HCT116 (cell line): ENCODE measurements at regions of chr12 and their contacts with region 1.

Region 1: GRCh38 chr12:52390739-52391617 is 5.5 kb upstream of the KRT84 start:
- DNase-seq: peak; percentile 24
- ATAC-seq: peak; percentile 79
- H3K4me3 ChIP-seq: no peak overlapping the region
- H3K27ac ChIP-seq: no peak overlapping the region
- H3K4me1 ChIP-seq: peaks cover 0 to 23% of the 10 kb centered on the region in 2 experiments; a peak in 1 of 4 replicates
- H3K27me3 ChIP-seq: no peaks in the 10 kb centered on the region
- CTCF ChIP-seq: peak; percentile 84 to 93 (median 85)
- POLR2A ChIP-seq: no peak
- RAD21 ChIP-seq: peak; percentile 91

Region 2: GRCh38 chr12:52139552-52140062 is 251.4 kb before region 1 on chr12:
- CTCF ChIA-PET with region 1: interaction called, 5 read pairs
- POLR2A ChIA-PET with region 1: no interaction called
- RAD21 ChIA-PET with region 1: no interaction called
- intact Hi-C with region 1: loop called (anchors 5 kb)
- DNase-seq: no peak
- ATAC-seq: peak; percentile 73
- H3K4me3 ChIP-seq: no peak overlapping the region
- H3K27ac ChIP-seq: no peak overlapping the region
- H3K4me1 ChIP-seq: peaks cover 19 to 43% of the 10 kb centered on the region in 2 experiments
- H3K27me3 ChIP-seq: no peaks in the 10 kb centered on the region
- CTCF ChIP-seq: peak in 2 of 3 experiments; percentile 96 to 98; a peak in 4 of 6 replicates
- POLR2A ChIP-seq: no peak
- RAD21 ChIP-seq: no peak

Region 3: DNA sequence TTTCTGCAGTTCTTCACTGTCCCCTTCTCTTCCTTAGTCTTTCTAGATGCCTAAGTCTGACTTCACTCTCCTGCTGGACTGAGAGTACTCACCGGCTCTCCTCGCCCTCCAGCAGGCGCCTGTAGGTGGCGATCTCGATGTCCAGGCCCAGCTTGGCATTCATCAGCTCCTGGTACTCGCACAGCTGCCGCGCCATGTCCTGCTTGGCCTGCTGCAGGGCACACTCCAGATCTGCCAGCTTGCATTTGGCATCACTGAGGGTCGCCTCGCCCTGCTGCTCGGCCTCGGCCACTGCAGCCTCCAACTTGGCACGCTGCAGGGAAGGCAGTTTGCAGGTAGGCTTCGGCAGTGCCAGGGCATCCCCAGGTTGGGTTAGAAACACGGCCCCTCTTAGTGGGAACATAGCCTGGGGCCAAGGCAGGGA is 10.7 kb before region 1 on chr12:
- CTCF ChIA-PET with region 1: interaction called, 17 read pairs
- POLR2A ChIA-PET with region 1: no interaction called
- RAD21 ChIA-PET with region 1: no interaction called
- intact Hi-C with region 1: no loop called
- DNase-seq: no peak
- ATAC-seq: peak; percentile 88
- H3K4me3 ChIP-seq: no peak overlapping the region
- H3K27ac ChIP-seq: no peak overlapping the region
- H3K4me1 ChIP-seq: no peaks in the 10 kb centered on the region
- H3K27me3 ChIP-seq: no peaks in the 10 kb centered on the region
- CTCF ChIP-seq: peak; percentile 37 to 75 (median 74); a peak in 5 of 6 replicates
- POLR2A ChIP-seq: no peak
- RAD21 ChIP-seq: peak; percentile 39

Region 4: GRCh38 chr12:52506858-52507715 is 116.1 kb after region 1 on chr12:
- CTCF ChIA-PET with region 1: interaction called, 11 read pairs
- POLR2A ChIA-PET with region 1: no interaction called
- RAD21 ChIA-PET with region 1: interaction called in 1 of 2 experiments, 3 read pairs
- intact Hi-C with region 1: loop called (anchors 1 kb)
- DNase-seq: no peak
- ATAC-seq: peak; percentile 95
- H3K4me3 ChIP-seq: no peak overlapping the region
- H3K27ac ChIP-seq: no peak overlapping the region
- H3K4me1 ChIP-seq: peaks cover 0 to 6% of the 10 kb centered on the region in 2 experiments; a peak in 1 of 4 replicates
- H3K27me3 ChIP-seq: no peaks in the 10 kb centered on the region
- CTCF ChIP-seq: peak; percentile 57 to 82 (median 64)
- POLR2A ChIP-seq: no peak
- RAD21 ChIP-seq: peak; percentile 63

Region 5: GRCh38 chr12:52561880-52562449 is 171.0 kb after region 1 on chr12:
- CTCF ChIA-PET with region 1: interaction called, 18 read pairs
- POLR2A ChIA-PET with region 1: interaction called, 3 read pairs
- RAD21 ChIA-PET with region 1: interaction called in 1 of 2 experiments, 4 read pairs
- intact Hi-C with region 1: loop called (anchors 5 kb)
- DNase-seq: peak; percentile 22
- ATAC-seq: peak; percentile 84
- H3K4me3 ChIP-seq: no peak overlapping the region
- H3K27ac ChIP-seq: no peak overlapping the region
- H3K4me1 ChIP-seq: no peaks in the 10 kb centered on the region
- H3K27me3 ChIP-seq: no peaks in the 10 kb centered on the region
- CTCF ChIP-seq: peak; percentile 59 to 66 (median 60); a peak in 5 of 6 replicates
- POLR2A ChIP-seq: no peak
- RAD21 ChIP-seq: peak; percentile 54

Region 6: DNA sequence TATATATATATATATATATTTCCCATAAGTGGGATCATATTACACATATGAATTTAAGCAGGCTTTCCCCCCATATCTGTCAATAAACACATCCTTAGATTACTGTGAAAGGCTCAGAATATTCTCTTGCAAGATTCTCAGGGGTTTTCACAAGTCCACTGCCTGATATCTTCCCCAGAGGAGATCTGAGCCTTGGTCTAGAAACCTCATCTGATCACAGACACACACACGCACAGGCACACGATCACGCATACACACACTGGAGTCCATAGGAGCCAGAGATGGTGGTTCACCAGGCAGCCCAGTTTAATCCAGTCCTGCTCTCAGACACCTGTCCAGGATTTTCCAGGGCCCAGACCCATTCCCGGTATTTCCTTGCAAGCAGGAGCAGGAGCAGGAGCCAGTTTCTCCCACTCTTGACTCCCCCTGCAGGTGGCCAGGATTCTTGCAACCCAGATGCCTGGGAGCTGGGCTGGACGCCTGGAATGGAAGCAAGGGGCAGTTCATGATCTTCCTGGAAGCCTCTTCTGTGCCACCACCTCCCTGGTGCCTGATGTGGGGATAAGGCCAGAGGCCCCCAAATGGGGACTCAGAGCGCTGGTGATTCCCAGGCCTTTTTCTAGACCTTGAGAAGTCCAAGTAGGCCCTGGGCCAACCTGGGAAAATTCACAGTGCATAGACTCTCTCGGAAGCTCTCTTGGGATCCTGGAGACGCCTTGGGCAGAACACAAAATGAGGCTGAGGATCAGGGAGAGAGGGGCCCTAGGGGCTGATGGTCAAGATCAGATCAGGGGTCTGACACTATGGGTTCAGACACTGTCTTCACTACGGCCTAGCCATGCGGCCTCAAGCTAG is 474.3 kb after region 1 on chr12:
- CTCF ChIA-PET with region 1: interaction called, 29 read pairs
- POLR2A ChIA-PET with region 1: interaction called, 6 read pairs
- RAD21 ChIA-PET with region 1: interaction called, 6 to 7 read pairs
- intact Hi-C with region 1: loop called (anchors 1 kb)
- DNase-seq: peak; percentile 79
- ATAC-seq: peak; percentile 90
- H3K4me3 ChIP-seq: no peak overlapping the region
- H3K27ac ChIP-seq: peak overlapping the region; percentile 15; the same call in 1 of the 2 replicates
- H3K4me1 ChIP-seq: peaks cover 5 to 18% of the 10 kb centered on the region in 2 experiments; a peak in 3 of 4 replicates
- H3K27me3 ChIP-seq: no peaks in the 10 kb centered on the region
- CTCF ChIP-seq: peak in 2 of 3 experiments; percentile 88 to 96; a peak in 4 of 6 replicates
- POLR2A ChIP-seq: no peak
- RAD21 ChIP-seq: no peak

Region 7: GRCh38 chr12:52879394-52880351 is 488.7 kb after region 1 on chr12:
- CTCF ChIA-PET with region 1: interaction called, 73 read pairs
- POLR2A ChIA-PET with region 1: interaction called, 4 read pairs
- RAD21 ChIA-PET with region 1: interaction called, 5 to 7 read pairs
- intact Hi-C with region 1: loop called (anchors 1 kb)
- DNase-seq: peak; percentile 86
- ATAC-seq: peak; percentile 87
- H3K4me3 ChIP-seq: peak overlapping the region; percentile 30 to 49
- H3K27ac ChIP-seq: peak overlapping the region; percentile 44
- H3K4me1 ChIP-seq: peaks cover 33 to 61% of the 10 kb centered on the region in 2 experiments
- H3K27me3 ChIP-seq: no peaks in the 10 kb centered on the region
- CTCF ChIP-seq: peak in 2 of 3 experiments; percentile 76 to 95; a peak in 4 of 6 replicates
- POLR2A ChIP-seq: no peak
- RAD21 ChIP-seq: no peak